ENCODE measurements at regions of chr5 and their contacts with region 1.

Region 1: DNA sequence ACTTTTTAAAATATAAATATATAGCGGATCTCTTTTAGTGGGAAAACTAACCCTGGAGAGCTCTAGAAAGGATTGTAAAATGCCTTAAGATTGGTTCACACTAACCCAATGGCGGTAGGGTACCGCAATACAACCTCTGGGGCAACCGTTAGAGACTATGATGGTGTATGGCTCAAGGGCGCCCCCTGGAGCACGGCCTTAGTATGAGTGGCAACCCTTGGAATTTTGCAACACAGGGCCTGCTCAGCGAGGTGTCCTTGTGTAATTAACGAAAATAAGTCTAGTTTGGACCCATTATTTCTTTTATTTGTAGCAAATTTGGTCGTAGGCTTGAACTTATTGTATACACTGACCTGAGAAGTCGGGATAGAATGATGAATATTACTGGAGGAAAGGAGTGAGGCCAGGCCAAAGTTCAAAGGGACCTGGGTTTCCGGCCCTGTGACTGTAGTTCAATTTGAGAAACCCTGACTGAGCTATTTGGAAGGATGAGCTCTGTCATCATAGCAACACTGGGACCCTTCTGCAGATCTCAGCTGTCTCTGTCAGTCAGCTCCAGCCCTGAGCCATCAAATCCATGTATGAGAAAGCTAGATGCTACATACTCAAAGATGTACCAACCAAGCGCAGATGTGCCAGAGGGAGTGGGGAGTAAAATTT is 54.8 kb downstream of the CAMK4 start:
- DNase-seq: peak; percentile 35 to 58
- ATAC-seq: peak; percentile 81 to 98
- H3K4me3 ChIP-seq: no peak overlapping the region
- H3K27ac ChIP-seq: no peak overlapping the region
- H3K4me1 ChIP-seq: no peaks in the 10 kb centered on the region
- CTCF ChIP-seq: peak; percentile 61
- EP300 ChIP-seq: no peak
- POLR2A ChIP-seq: no peak
- RAD21 ChIP-seq: peak; percentile 60 to 81; a peak in 4 of 5 replicates

Region 2: GRCh38 chr5:111158105-111158744 is 120.8 kb before region 1 on chr5:
- CTCF ChIA-PET with region 1: interaction called, 11 read pairs
- POLR2A ChIA-PET with region 1: no interaction called
- DNase-seq: peak; percentile 25 to 74
- ATAC-seq: peak; percentile 85 to 94; a peak in 4 of 6 replicates
- H3K4me3 ChIP-seq: no peak overlapping the region
- H3K27ac ChIP-seq: no peak overlapping the region
- H3K4me1 ChIP-seq: no peaks in the 10 kb centered on the region
- CTCF ChIP-seq: peak; percentile 96
- EP300 ChIP-seq: no peak
- POLR2A ChIP-seq: no peak
- RAD21 ChIP-seq: peak; percentile 87 to 92

Region 3: GRCh38 chr5:111266491-111266890 is 12.5 kb before region 1 on chr5:
- CTCF ChIA-PET with region 1: interaction called, 16 read pairs
- POLR2A ChIA-PET with region 1: no interaction called
- DNase-seq: no peak
- ATAC-seq: no peak
- H3K4me3 ChIP-seq: no peak overlapping the region
- H3K27ac ChIP-seq: no peak overlapping the region
- H3K4me1 ChIP-seq: no peaks in the 10 kb centered on the region
- CTCF ChIP-seq: no peak
- EP300 ChIP-seq: no peak
- POLR2A ChIP-seq: no peak
- RAD21 ChIP-seq: no peak

Region 4: GRCh38 chr5:111364992-111365391 is 86.0 kb after region 1 on chr5:
- CTCF ChIA-PET with region 1: no interaction called
- POLR2A ChIA-PET with region 1: no interaction called
- DNase-seq: no peak
- ATAC-seq: no peak
- H3K4me3 ChIP-seq: no peak overlapping the region
- H3K27ac ChIP-seq: no peak overlapping the region
- H3K4me1 ChIP-seq: no peaks in the 10 kb centered on the region
- CTCF ChIP-seq: no peak
- EP300 ChIP-seq: no peak
- POLR2A ChIP-seq: no peak
- RAD21 ChIP-seq: no peak